ENCODE measurements at regions of chr9 and their contacts with region 1.

Region 1: GRCh38 chr9:129811967-129812363 is 9.0 kb downstream of the TOR1B start:
- DNase-seq: no peak
- ATAC-seq: peak; percentile 40
- H3K4me3 Mint-ChIP-seq: no peak overlapping the region
- H3K27ac Mint-ChIP-seq: peak overlapping the region; percentile 51
- H3K4me1 Mint-ChIP-seq: peaks cover 6% of the 10 kb centered on the region
- H3K27me3 Mint-ChIP-seq: no peaks in the 10 kb centered on the region
- CTCF ChIP-seq: no peak

Region 2: GRCh38 chr9:129823935-129824601 is 12.1 kb after region 1 on chr9 and contains the start of gene TOR1A:
- CTCF ChIA-PET with region 1: interaction called, 4 read pairs
- POLR2A ChIA-PET with region 1: interaction called, 10 read pairs
- intact Hi-C with region 1: no loop called
- DNase-seq: peak; percentile 97
- ATAC-seq: peak; percentile 92
- H3K4me3 Mint-ChIP-seq: peak within 1 kb of the TSS; percentile 86
- H3K27ac Mint-ChIP-seq: peak within 1 kb of the TSS; percentile 61
- H3K4me1 Mint-ChIP-seq: peaks cover 12% of the 10 kb centered on the region
- H3K27me3 Mint-ChIP-seq: no peaks in the 10 kb centered on the region
- CTCF ChIP-seq: no peak
- total RNA-seq, gene TOR1A: 31.9 to 32.4 TPM

Measured in activated CD8-positive, alpha-beta T cell treated with anti-CD3 and anti-CD28 coated beads for 36 hours (primary cell).